MCF 10A (cell line): ENCODE measurements at regions of chr17 and their contacts with region 1.

Region 1: GRCh38 chr17:66715745-66716156 is 119.2 kb upstream of the CACNG5 start:
- DNase-seq: peak; percentile 74
- H3K4me3 Mint-ChIP-seq: no peak overlapping the region
- H3K27ac Mint-ChIP-seq: no peak overlapping the region
- H3K4me1 Mint-ChIP-seq: peaks cover 5% of the 10 kb centered on the region
- H3K27me3 Mint-ChIP-seq: no peaks in the 10 kb centered on the region
- CTCF ChIP-seq: peak; percentile 57

Region 2: GRCh38 chr17:66200685-66201092 is 515.1 kb before region 1 on chr17:
- CTCF ChIA-PET with region 1: interaction called, 4 read pairs
- POLR2A ChIA-PET with region 1: interaction called, 3 read pairs
- intact Hi-C with region 1: loop called (anchors 1 kb)
- DNase-seq: peak; percentile 79
- H3K4me3 Mint-ChIP-seq: no peak overlapping the region
- H3K27ac Mint-ChIP-seq: no peak overlapping the region
- H3K4me1 Mint-ChIP-seq: peaks cover 6% of the 10 kb centered on the region
- H3K27me3 Mint-ChIP-seq: no peaks in the 10 kb centered on the region
- CTCF ChIP-seq: peak; percentile 64

Region 3: GRCh38 chr17:66580184-66580955 is 135.4 kb before region 1 on chr17:
- CTCF ChIA-PET with region 1: no interaction called
- POLR2A ChIA-PET with region 1: no interaction called
- intact Hi-C with region 1: no loop called
- DNase-seq: no peak
- H3K4me3 Mint-ChIP-seq: no peak overlapping the region
- H3K27ac Mint-ChIP-seq: no peak overlapping the region
- H3K4me1 Mint-ChIP-seq: peaks cover 6% of the 10 kb centered on the region
- H3K27me3 Mint-ChIP-seq: no peaks in the 10 kb centered on the region
- CTCF ChIP-seq: no peak

Region 4: GRCh38 chr17:66739553-66739952 is 23.8 kb after region 1 on chr17:
- CTCF ChIA-PET with region 1: no interaction called
- POLR2A ChIA-PET with region 1: no interaction called
- intact Hi-C with region 1: loop called (anchors 1 kb)
- DNase-seq: no peak
- H3K4me3 Mint-ChIP-seq: no peak overlapping the region
- H3K27ac Mint-ChIP-seq: no peak overlapping the region
- H3K4me1 Mint-ChIP-seq: no peaks in the 10 kb centered on the region
- H3K27me3 Mint-ChIP-seq: no peaks in the 10 kb centered on the region
- CTCF ChIP-seq: no peak

Region 5: GRCh38 chr17:66906321-66907278 is 190.8 kb after region 1 on chr17:
- CTCF ChIA-PET with region 1: interaction called, 29 read pairs
- POLR2A ChIA-PET with region 1: interaction called, 3 read pairs
- intact Hi-C with region 1: loop called (anchors 1 kb)
- DNase-seq: peak; percentile 86
- H3K4me3 Mint-ChIP-seq: no peak overlapping the region
- H3K27ac Mint-ChIP-seq: no peak overlapping the region
- H3K4me1 Mint-ChIP-seq: peaks cover 19% of the 10 kb centered on the region
- H3K27me3 Mint-ChIP-seq: no peaks in the 10 kb centered on the region
- CTCF ChIP-seq: peak; percentile 88

Region 6: DNA sequence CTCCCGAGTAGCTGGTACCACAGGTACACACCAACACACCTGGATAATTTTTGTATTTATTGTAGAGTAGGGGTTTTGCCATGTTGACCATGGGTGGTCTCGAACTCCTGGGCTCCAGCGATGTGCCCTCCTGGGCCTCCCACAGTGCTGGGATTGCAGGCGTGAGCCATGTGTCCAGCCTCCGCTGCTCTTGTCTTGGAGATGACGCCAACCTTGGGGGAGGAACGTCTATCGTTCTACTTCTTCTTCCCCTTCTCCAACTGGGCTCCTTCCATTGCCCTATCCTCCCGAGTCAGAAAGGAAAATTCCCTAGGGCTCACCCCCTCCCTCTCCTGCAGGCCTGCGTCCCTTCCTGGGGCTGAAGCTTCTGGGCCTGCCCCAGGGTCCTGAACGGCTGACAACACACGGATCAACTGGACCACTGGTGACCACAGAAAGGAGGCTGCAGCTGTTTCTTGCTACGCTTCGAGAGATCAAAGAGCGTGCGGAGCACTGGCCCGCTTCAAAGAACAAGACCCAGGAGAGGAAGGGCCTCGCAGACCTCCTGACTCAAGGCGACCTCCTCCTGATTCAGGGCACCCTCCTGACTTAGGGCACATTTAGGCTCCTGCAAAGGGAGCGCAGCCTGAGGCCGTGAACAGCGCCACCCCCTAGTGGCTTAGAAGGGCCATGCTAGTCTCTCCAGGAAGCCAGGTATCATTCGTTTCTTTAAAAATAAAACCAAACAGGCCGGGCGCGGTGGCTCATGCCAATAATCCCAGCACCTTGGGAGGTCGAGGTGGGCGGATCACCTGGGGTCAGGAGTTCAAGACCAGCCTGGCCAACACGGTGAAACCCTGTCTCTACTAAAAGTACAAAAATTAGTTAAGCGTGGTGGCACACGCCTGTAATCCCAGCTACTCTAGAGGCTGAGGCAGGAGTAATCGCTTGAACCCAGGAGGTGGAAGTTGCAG is 577.8 kb after region 1 on chr17:
- CTCF ChIA-PET with region 1: no interaction called
- POLR2A ChIA-PET with region 1: no interaction called
- intact Hi-C with region 1: loop called (anchors 5 kb)
- DNase-seq: peak; percentile 74
- H3K4me3 Mint-ChIP-seq: no peak overlapping the region
- H3K27ac Mint-ChIP-seq: no peak overlapping the region
- H3K4me1 Mint-ChIP-seq: no peaks in the 10 kb centered on the region
- H3K27me3 Mint-ChIP-seq: no peaks in the 10 kb centered on the region
- CTCF ChIP-seq: peak; percentile 73